Esophagus muscularis mucosa (tissue), 4 donors: ENCODE measurements at regions of chr2 and their contacts with region 1.

Region 1: DNA sequence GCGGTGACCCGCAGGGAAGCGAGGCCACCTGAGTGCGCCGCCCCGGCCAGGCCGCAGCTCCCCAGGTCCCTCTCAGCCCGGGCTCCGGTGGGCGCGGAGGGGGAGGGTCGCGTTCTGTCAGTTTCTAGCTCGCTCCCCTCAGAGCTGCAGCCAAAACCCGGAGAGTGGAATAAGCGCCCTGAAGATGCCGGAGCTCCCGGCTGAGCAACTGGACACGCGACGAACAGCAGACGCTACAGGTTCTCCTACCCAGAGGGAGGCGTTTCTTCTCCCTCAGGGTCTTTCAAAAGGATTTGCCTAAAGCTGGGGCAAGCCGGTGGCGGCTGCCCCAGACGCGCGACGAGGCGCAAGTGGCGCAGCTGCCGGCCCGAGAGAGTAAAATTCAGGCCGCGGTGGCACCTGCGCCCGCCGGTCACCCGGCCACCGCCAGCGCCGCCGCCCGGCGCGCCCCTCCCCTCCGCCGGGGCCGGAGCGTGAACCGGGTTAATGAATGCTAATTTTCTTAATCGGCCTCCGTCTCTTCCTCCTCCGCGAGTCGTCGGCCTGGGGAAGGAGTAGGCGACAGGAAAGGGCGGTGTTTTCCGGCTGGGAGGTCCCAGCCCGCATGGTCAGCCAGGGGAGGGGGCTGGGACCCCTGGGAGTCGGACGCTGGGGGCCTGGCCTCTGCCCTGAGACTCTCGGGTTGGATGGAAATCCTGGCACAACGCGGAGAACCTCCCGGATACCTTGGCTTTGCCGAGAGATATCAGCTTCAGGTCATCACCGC is 845 bp upstream of the CDC42EP3 start:
- DNase-seq: no peak
- H3K4me3 ChIP-seq: peak overlapping the region; percentile 85 to 97 (median 92)
- H3K27ac ChIP-seq: peak overlapping the region; percentile 95 to 98 (median 96)
- H3K4me1 ChIP-seq: peaks cover 14 to 41% (median 31%) of the 10 kb centered on the region in 4 donors
- H3K27me3 ChIP-seq: no peaks in the 10 kb centered on the region
- CTCF ChIP-seq: peak in 1 of 3 experiments; percentile 8
- EP300 ChIP-seq: no peak
- POLR2A ChIP-seq: no peak

Region 2: DNA sequence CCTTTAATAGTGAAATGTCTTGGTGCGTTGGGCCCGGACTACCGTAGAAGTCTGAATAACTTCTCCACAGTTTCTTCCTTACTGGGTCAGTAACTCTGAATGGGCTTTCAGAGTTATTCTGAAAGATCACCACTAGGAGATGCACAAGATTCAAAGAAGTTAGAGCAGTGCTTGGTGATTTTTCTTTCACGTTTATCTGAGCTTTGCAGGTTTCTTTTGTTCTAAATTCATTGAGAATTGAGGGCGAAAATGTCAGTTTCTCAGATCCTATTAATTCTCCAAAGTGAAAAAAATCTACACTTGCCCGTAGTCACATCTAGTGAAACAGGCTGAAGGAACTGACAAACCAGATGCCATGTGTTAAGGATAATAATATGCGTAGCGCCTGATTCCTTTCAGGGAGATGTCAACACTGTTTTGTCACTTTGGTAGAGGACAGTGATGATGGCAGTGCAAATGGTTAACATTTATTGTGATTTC is 257.8 kb before region 1 on chr2:
- intact Hi-C with region 1: loop called (anchors 5 kb)
- DNase-seq: no peak
- H3K4me3 ChIP-seq: no peak overlapping the region
- H3K27ac ChIP-seq: peak overlapping the region; percentile 47 to 70 (median 57)
- H3K4me1 ChIP-seq: peaks cover 13 to 29% (median 26%) of the 10 kb centered on the region in 4 donors
- H3K27me3 ChIP-seq: no peaks in the 10 kb centered on the region
- CTCF ChIP-seq: peak; percentile 80 to 90 (median 82)
- EP300 ChIP-seq: no peak
- POLR2A ChIP-seq: no peak

Region 3: GRCh38 chr2:37776487-37776886 is 104.2 kb after region 1 on chr2:
- intact Hi-C with region 1: loop called (anchors 10 kb)
- DNase-seq: peak; percentile 86
- H3K4me3 ChIP-seq: no peak overlapping the region
- H3K27ac ChIP-seq: peak overlapping the region; percentile 83 to 87 (median 84)
- H3K4me1 ChIP-seq: peaks cover 13 to 96% (median 89%) of the 10 kb centered on the region in 4 donors
- H3K27me3 ChIP-seq: no peaks in the 10 kb centered on the region
- CTCF ChIP-seq: no peak
- EP300 ChIP-seq: no peak
- POLR2A ChIP-seq: no peak